ENCODE measurements at regions of chr9 and their contacts with region 1.

Region 1: DNA sequence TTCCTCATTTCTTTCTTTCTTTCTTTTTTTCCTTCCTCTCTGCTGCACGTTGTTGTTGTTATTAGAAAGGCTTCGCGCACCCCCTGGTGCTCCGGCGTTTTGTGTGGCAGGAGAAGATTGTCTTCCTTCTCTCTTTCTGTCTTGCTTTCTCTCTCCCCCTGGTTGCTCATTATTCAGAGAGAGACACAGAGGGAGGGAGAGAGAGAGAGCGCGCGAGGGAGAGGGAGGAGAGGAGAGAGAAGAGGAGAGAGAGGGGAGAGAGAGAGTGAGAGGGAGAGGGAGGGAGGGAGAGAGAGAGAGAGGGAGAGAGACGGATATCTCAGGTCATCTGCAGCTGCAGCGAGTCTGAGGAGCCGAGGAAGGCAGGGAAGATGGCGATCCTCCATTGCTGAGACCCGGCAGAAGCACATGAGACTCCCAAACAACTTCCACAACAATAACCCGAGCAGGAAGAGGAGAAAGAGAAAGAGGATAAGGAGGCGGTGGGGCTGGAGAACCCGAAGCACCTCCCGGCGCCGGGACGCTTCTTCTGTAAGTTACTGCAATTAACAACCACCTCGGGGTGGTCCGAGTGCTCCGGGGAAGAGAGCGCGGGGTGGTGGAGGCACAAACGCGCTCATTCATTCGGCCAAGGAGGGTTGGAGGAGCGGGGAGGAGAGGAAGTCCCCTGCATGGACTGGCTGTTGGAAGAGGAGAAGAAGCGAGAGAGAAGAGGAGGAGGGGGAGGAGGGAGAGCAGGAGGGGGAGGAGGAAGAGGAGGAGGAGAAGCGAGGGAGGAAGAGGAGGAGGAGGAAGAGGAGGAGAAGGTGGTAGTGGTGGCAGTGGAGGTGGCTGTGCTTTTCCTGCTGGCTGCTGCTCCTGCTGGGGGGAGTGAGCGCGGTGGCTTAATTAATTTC is at the start of gene ZNF462:
- DNase-seq: peak; percentile 76
- H3K4me3 ChIP-seq: peak within 1 kb of the TSS; percentile 86 to 99 (median 91)
- H3K27ac ChIP-seq: peak within 1 kb of the TSS; percentile 84
- H3K4me1 ChIP-seq: peaks cover 23% of the 10 kb centered on the region
- H3K27me3 ChIP-seq: no peaks in the 10 kb centered on the region
- CTCF ChIP-seq: peak; percentile 14 to 50
- total RNA-seq, gene ZNF462: 28.0 to 43.9 TPM

Region 2: GRCh38 chr9:105901514-105902109 is 961.5 kb before region 1 on chr9:
- CTCF ChIA-PET with region 1: no interaction called
- dilution Hi-C with region 1: no loop called
- in situ Hi-C with region 1: no loop called
- intact Hi-C with region 1: loop called (anchors 1 kb)
- DNase-seq: peak; percentile 37
- H3K4me3 ChIP-seq: no peak overlapping the region
- H3K27ac ChIP-seq: no peak overlapping the region
- H3K4me1 ChIP-seq: no peaks in the 10 kb centered on the region
- H3K27me3 ChIP-seq: no peaks in the 10 kb centered on the region
- CTCF ChIP-seq: peak; percentile 72 to 93

Region 3: GRCh38 chr9:106438928-106439327 is 424.1 kb before region 1 on chr9:
- CTCF ChIA-PET with region 1: no interaction called
- dilution Hi-C with region 1: no loop called
- in situ Hi-C with region 1: loop called in 1 of 2 experiments (anchors 25 kb)
- intact Hi-C with region 1: no loop called
- DNase-seq: no peak
- H3K4me3 ChIP-seq: no peak overlapping the region
- H3K27ac ChIP-seq: no peak overlapping the region
- H3K4me1 ChIP-seq: no peaks in the 10 kb centered on the region
- H3K27me3 ChIP-seq: no peaks in the 10 kb centered on the region
- CTCF ChIP-seq: no peak

Region 4: DNA sequence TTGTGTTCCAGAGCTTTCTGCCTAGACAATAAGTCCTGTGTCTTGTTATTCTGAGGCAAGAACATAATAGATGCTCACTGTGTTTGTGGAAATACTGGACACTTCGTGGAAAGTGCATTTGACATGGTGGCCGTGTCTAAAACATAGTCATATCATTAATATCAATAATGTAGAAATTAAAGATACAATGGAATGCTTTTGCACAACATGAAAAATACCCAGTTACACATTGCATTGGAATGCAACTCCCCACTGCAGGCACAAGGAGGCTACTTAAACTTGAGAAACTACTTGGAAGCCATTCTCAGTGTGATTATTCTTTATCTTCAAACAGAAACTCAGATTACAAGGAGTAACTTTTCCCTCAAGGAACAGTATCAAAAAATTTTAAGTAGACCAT is 145.4 kb before region 1 on chr9:
- CTCF ChIA-PET with region 1: no interaction called
- dilution Hi-C with region 1: no loop called
- in situ Hi-C with region 1: no loop called
- intact Hi-C with region 1: loop called (anchors 2 kb)
- DNase-seq: peak; percentile 81
- H3K4me3 ChIP-seq: peak overlapping the region in 1 of 3 experiments; percentile 29
- H3K27ac ChIP-seq: peak overlapping the region; percentile 65
- H3K4me1 ChIP-seq: peaks cover 22% of the 10 kb centered on the region
- H3K27me3 ChIP-seq: no peaks in the 10 kb centered on the region
- CTCF ChIP-seq: peak; percentile 11 to 25

Region 5: GRCh38 chr9:106916479-106917240 is 53.6 kb after region 1 on chr9:
- CTCF ChIA-PET with region 1: no interaction called
- dilution Hi-C with region 1: no loop called
- in situ Hi-C with region 1: no loop called
- intact Hi-C with region 1: loop called (anchors 2 kb)
- DNase-seq: peak; percentile 87
- H3K4me3 ChIP-seq: peak overlapping the region in 1 of 3 experiments; percentile 3
- H3K27ac ChIP-seq: peak overlapping the region; percentile 68
- H3K4me1 ChIP-seq: peaks cover 35% of the 10 kb centered on the region
- H3K27me3 ChIP-seq: no peaks in the 10 kb centered on the region
- CTCF ChIP-seq: no peak

Region 6: DNA sequence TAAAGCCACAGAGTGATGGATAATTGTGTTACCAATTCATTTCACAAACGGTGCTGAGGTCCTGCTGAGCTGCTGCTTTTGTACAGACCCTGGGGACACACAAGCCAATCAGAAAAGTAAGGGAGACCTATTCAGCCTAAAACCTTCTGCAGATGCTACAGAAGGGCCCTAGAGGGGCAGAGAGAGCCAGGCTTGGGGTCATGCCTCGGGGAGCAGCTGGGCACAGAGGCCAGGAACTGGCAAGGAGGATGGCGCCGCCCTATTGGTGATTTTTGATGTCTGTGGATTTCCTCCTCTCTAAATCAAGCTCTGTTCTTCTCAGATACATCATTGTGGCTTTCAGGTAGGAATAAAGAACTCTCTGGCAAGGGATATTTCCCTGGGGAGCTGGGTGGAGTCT is 181.8 kb after region 1 on chr9:
- CTCF ChIA-PET with region 1: interaction called, 3 read pairs
- dilution Hi-C with region 1: no loop called
- in situ Hi-C with region 1: no loop called
- intact Hi-C with region 1: loop called (anchors 2 kb)
- DNase-seq: no peak
- H3K4me3 ChIP-seq: no peak overlapping the region
- H3K27ac ChIP-seq: no peak overlapping the region
- H3K4me1 ChIP-seq: no peaks in the 10 kb centered on the region
- H3K27me3 ChIP-seq: no peaks in the 10 kb centered on the region
- CTCF ChIP-seq: peak; percentile 30 to 42

Region 7: GRCh38 chr9:107172160-107172978 is 309.3 kb after region 1 on chr9:
- CTCF ChIA-PET with region 1: no interaction called
- dilution Hi-C with region 1: no loop called
- in situ Hi-C with region 1: no loop called
- intact Hi-C with region 1: loop called (anchors 1 kb)
- DNase-seq: peak; percentile 64
- H3K4me3 ChIP-seq: no peak overlapping the region
- H3K27ac ChIP-seq: no peak overlapping the region
- H3K4me1 ChIP-seq: no peaks in the 10 kb centered on the region
- H3K27me3 ChIP-seq: no peaks in the 10 kb centered on the region
- CTCF ChIP-seq: peak; percentile 91 to 95